H1 (cell line): ENCODE measurements at regions of chr14 and their contacts with region 1.

Region 1: GRCh38 chr14:103078093-103078749 is 5.8 kb upstream of the LBHD2 start:
- DNase-seq: peak in 1 of 2 experiments; percentile 60
- H3K4me3 ChIP-seq: no peak overlapping the region
- H3K27ac ChIP-seq: no peak overlapping the region
- H3K4me1 ChIP-seq: peaks cover 0 to 6% (median 0%) of the 10 kb centered on the region in 4 experiments; a peak in 2 of 7 replicates
- H3K27me3 ChIP-seq: peaks cover 0 to 11% (median 6%) of the 10 kb centered on the region in 4 experiments; a peak in 3 of 7 replicates
- CTCF ChIP-seq: peak; percentile 89 to 90 (median 89)
- EP300 ChIP-seq: no peak
- POLR2A ChIP-seq: no peak
- RAD21 ChIP-seq: peak; percentile 93 to 94

Region 2: DNA sequence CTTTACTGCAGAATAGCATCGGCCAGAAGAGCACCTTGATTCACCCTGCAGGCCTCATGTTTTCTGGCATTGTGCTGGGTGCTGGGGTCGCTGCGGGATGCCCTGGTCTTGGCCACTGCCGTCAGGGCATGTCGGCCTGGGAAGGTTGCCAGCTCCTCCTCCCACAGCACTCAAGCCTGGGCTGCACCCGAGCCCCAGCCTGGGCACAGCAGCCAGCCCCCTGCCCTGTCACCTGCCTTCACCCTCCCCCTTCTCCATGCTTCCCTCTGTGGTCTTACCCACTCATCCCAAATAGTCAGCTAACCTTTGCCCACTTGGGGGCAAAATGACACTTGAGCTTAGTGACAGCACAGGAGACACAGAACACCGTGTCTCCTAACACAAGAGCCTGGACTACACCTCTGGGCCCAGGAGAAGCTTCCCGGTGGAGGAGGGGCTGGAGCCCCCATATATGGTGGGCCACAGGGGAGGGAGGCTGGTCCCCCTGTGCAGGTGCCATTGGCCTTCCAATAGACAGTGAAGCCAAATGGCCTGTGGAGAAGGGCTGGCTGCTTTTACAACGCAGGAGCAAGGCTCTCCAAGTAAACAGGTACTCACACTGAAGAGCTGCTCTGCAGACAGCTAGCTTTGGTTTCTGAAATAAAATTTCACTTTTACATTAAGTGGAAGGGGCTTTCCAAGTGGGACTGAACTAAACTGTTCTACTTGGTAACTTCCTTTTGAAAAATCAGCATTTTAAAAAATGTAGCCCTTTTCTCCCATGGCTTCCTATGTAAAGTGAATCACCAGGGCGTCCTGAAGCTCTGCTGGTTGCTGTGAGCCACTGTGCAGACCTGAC is 207.0 kb before region 1 on chr14:
- CTCF ChIA-PET with region 1: no interaction called
- POLR2A ChIA-PET with region 1: no interaction called
- DNase-seq: no peak
- H3K4me3 ChIP-seq: no peak overlapping the region
- H3K27ac ChIP-seq: no peak overlapping the region
- H3K4me1 ChIP-seq: no peaks in the 10 kb centered on the region; a peak in 2 of 7 replicates
- H3K27me3 ChIP-seq: no peaks in the 10 kb centered on the region
- CTCF ChIP-seq: no peak
- EP300 ChIP-seq: no peak
- POLR2A ChIP-seq: no peak
- RAD21 ChIP-seq: no peak

Region 3: GRCh38 chr14:103091041-103091882 is 13.0 kb after region 1 on chr14:
- CTCF ChIA-PET with region 1: interaction called, 17 read pairs
- POLR2A ChIA-PET with region 1: no interaction called
- DNase-seq: peak in 1 of 2 experiments; percentile 76
- H3K4me3 ChIP-seq: peak overlapping the region; percentile 18 to 59 (median 30); a peak in 7 of 8 replicates
- H3K27ac ChIP-seq: no peak overlapping the region
- H3K4me1 ChIP-seq: peaks cover 2 to 13% (median 4%) of the 10 kb centered on the region in 4 experiments; a peak in 6 of 7 replicates
- H3K27me3 ChIP-seq: peaks cover 0 to 12% (median 6%) of the 10 kb centered on the region in 4 experiments; a peak in 4 of 7 replicates
- CTCF ChIP-seq: peak in 2 of 3 experiments; percentile 36 to 43; a peak in 3 of 4 replicates
- EP300 ChIP-seq: no peak
- POLR2A ChIP-seq: no peak
- RAD21 ChIP-seq: peak in 1 of 2 experiments; percentile 32; a peak in 1 of 4 replicates

Region 4: GRCh38 chr14:103315351-103315911 is 237.2 kb after region 1 on chr14:
- CTCF ChIA-PET with region 1: interaction called, 10 read pairs
- POLR2A ChIA-PET with region 1: no interaction called
- DNase-seq: no peak
- H3K4me3 ChIP-seq: no peak overlapping the region
- H3K27ac ChIP-seq: no peak overlapping the region
- H3K4me1 ChIP-seq: peaks cover 4 to 17% (median 9%) of the 10 kb centered on the region in 4 experiments
- H3K27me3 ChIP-seq: no peaks in the 10 kb centered on the region
- CTCF ChIP-seq: no peak
- EP300 ChIP-seq: no peak
- POLR2A ChIP-seq: no peak
- RAD21 ChIP-seq: no peak